Activated naive CD4-positive, alpha-beta T cell treated with anti-CD3 and anti-CD28 coated beads for 36 hours (primary cell): ENCODE measurements at regions of chr9 and their contacts with region 1.

Region 1: DNA sequence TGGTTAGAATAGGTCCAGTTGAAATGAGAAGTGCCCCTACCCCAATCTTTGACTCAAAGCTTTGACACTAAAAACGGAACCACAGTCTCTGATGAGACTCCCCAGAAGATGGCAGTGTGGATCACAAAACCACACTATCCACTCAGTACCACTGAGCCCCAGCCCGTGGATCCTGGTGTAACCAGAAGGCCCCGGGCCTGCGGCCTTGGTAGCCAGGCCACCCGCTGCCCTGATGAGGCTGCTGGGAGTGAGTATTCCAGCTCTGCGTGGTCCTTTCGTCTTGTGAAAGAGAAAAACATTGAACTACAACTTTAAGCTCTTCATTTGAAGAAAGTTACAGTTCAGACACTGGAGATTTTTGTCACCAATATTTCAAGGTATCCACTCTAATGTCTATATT is 42.2 kb upstream of the FBP1 start:
- DNase-seq: peak; percentile 74
- H3K4me3 Mint-ChIP-seq: no peak overlapping the region
- H3K27ac Mint-ChIP-seq: no peak overlapping the region
- H3K4me1 Mint-ChIP-seq: no peaks in the 10 kb centered on the region
- H3K27me3 Mint-ChIP-seq: peaks cover 2% of the 10 kb centered on the region

Region 2: DNA sequence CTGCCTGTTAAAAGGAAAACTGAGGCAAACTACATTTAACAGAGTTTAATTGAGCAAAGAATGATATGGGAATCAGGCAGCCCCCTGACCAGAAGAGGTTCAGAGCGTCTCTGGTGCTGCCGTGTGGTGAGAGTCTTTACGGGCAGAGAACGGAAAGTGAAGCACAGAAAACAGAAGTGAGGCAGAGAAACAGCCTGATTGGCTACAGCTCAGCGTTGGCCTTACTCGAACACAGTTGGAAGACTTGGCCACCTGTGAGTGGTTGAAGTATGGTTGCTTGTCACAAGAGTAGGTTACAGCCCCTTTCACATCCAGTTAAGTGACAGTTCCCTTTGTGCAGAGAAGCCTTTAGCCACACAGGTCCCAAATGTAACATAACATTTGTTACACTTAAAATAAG is 25.3 kb before region 1 on chr9:
- CTCF ChIA-PET with region 1: interaction called, 12 read pairs
- intact Hi-C with region 1: no loop called
- DNase-seq: peak; percentile 82
- H3K4me3 Mint-ChIP-seq: peak overlapping the region; percentile 73
- H3K27ac Mint-ChIP-seq: peak overlapping the region; percentile 79
- H3K4me1 Mint-ChIP-seq: peaks cover 20% of the 10 kb centered on the region
- H3K27me3 Mint-ChIP-seq: no peaks in the 10 kb centered on the region

Region 3: DNA sequence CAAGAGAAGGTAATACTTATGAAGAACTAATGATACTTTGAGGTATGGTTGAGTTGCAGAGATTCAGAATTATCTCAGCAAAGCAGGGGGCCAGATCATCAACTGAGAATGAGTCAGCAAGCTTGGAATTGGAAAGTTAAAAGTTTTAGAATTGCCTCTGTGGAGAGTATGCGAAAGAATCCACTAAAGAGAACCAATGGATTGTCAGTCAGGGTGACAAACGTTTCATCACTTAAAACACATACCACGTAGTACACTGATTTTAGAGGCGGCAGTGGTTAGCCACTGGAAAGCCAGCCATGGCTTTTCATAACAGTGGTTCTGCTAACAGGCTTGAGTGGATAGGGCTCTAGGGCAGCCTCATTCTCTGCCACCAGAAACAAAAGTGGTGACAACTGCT is 75.7 kb after region 1 on chr9:
- CTCF ChIA-PET with region 1: no interaction called
- intact Hi-C with region 1: no loop called
- DNase-seq: no peak
- H3K4me3 Mint-ChIP-seq: no peak overlapping the region
- H3K27ac Mint-ChIP-seq: no peak overlapping the region
- H3K4me1 Mint-ChIP-seq: peaks cover 4% of the 10 kb centered on the region
- H3K27me3 Mint-ChIP-seq: no peaks in the 10 kb centered on the region

Region 4: DNA sequence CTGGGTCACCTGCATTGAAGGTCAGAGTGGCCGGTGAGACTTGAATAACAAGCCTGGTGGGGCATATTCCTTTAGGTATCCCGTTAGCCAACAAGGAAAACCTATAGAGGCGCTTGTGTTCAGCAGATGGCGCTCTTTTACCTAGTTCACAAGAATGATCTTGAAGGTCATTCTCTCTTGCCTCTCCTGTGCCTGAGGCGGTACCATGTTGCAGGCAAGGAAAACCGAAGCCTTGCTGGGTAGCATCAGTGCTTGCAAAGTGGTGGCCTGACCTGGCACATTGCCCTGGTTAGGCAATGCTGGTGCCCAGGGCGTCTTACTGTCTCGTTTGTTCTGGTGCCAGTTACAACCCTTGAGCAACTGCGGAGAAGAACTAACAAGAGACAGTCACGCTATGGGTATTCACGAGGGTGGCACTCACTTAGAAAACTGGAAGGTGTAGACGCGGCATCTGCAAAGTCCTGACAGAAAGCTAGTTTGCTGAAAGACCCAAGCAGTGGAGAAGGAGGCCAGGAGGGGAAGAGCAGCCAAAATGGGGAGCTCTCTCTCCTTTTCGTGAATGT is 101.7 kb after region 1 on chr9:
- CTCF ChIA-PET with region 1: interaction called, 4 read pairs
- intact Hi-C with region 1: loop called (anchors 1 kb)
- DNase-seq: peak; percentile 66
- H3K4me3 Mint-ChIP-seq: no peak overlapping the region
- H3K27ac Mint-ChIP-seq: no peak overlapping the region
- H3K4me1 Mint-ChIP-seq: peaks cover 6% of the 10 kb centered on the region
- H3K27me3 Mint-ChIP-seq: no peaks in the 10 kb centered on the region

Region 5: DNA sequence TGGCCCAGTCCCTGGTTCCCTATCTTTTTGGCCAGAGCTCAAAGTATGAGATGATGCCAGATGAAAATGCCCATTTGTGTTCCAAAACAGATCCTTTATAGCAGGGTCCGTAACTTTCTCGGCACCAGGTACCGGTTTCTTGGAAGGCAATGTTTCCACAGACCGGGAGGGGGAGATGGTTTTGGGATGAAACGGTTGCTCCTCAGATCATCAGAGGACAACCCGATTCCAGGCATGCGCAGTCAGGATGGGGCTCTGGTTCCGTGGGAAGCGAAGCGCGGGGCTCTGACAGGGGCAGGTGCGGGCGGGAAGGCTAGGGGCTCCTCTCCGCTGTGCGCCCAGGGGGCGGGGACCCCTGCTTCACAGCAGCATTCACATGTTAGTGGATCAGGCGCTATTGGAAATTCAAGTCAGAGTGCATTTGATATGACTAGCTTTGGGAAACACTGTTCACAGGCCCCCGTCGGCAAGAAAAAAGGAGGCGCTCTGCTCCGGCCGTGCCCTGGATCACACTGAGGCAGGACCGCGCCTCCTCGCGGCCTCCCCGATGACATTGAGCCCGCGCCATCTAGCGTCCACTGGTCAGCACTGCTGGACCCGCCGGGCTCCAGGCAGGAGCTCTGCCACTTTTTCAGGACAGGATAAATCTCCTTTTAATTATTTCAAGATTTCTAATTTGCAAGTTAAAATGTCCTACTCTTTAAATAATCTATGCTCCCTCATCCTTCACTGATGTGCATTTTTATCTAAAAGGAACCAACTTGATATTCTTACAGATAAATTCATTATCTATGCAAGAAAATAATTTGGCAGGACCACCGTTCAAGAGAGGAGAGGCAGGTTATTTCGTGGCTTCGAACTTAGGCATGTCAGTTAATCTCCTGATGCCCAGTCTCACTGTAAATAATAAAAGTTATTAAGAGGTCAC is 446.0 kb after region 1 on chr9:
- CTCF ChIA-PET with region 1: interaction called, 122 read pairs
- intact Hi-C with region 1: loop called (anchors 1 kb)
- DNase-seq: peak; percentile 86
- H3K4me3 Mint-ChIP-seq: no peak overlapping the region
- H3K27ac Mint-ChIP-seq: no peak overlapping the region
- H3K4me1 Mint-ChIP-seq: peaks cover 2% of the 10 kb centered on the region
- H3K27me3 Mint-ChIP-seq: no peaks in the 10 kb centered on the region

Region 6: GRCh38 chr9:95167998-95168397 is 486.5 kb after region 1 on chr9:
- CTCF ChIA-PET with region 1: interaction called, 10 read pairs
- intact Hi-C with region 1: no loop called
- DNase-seq: peak; percentile 69
- H3K4me3 Mint-ChIP-seq: no peak overlapping the region
- H3K27ac Mint-ChIP-seq: no peak overlapping the region
- H3K4me1 Mint-ChIP-seq: peaks cover 10% of the 10 kb centered on the region
- H3K27me3 Mint-ChIP-seq: no peaks in the 10 kb centered on the region